Activated CD8-positive, alpha-beta memory T cell treated with anti-CD3 and anti-CD28 coated beads, Interleukin-2, amount 10 ng/mL, durations not matched to agents 7 days and 5 days (primary cell): ENCODE measurements at regions of chr15 and their contacts with region 1.

Region 1: GRCh38 chr15:65638681-65639089 is 16.9 kb downstream of the SLC24A1 start:
- DNase-seq: peak; percentile 62
- ATAC-seq: peak; percentile 78
- H3K4me3 Mint-ChIP-seq: peak overlapping the region; percentile 52
- H3K27ac Mint-ChIP-seq: peak overlapping the region; percentile 3
- H3K4me1 Mint-ChIP-seq: peaks cover 17% of the 10 kb centered on the region
- H3K27me3 Mint-ChIP-seq: no peaks in the 10 kb centered on the region

Region 2: GRCh38 chr15:65344214-65344917 is 294.3 kb before region 1 on chr15:
- CTCF ChIA-PET with region 1: no interaction called
- DNase-seq: no peak
- ATAC-seq: no peak
- H3K4me3 Mint-ChIP-seq: no peak overlapping the region
- H3K27ac Mint-ChIP-seq: no peak overlapping the region
- H3K4me1 Mint-ChIP-seq: peaks cover 4% of the 10 kb centered on the region
- H3K27me3 Mint-ChIP-seq: peaks cover 33% of the 10 kb centered on the region

Region 3: DNA sequence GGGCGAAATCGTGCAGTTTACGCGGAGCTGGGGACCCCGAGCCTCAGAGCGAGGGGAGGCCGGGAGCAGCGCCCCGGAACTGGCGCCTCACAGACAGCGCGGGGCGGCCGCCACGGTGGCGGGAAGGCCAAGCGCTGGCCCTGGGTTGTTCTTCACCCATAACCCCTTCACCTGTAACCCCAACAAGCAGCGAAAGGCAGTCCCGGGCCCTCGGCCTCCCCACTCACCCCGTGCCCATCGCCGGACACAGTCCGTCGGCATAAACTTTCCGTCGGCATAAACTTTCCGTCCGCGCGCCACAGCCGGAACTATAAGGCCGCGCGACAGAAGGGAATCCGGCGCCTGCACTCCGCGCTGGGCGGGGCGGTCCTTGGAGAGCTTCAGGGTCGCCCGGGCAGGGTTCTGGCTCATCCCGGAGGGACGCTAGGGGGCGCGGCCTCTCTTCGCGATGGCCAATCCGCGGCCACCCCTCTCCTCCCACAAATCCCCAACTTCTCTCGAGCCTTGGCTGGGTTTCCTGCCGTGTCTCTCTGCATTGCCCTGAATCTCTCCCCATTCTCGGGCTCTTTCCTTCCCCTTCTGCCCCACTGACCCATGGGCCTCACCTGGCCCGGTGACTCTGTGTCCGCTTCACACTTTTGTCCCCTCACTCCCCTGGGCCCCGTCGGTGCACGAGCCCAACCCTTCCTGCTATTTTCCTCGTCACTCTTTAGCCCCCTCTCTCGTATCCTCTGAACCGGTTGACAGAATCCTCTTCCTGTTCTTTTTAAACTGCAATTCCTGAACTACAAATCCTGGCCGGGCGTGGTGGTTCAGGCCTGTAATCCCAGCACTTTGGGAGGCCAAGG is 27.6 kb before region 1 on chr15 and contains the start of gene INTS14:
- CTCF ChIA-PET with region 1: interaction called, 11 read pairs
- DNase-seq: peak; percentile 96
- ATAC-seq: peak; percentile 99
- H3K4me3 Mint-ChIP-seq: peak within 1 kb of the TSS; percentile 99
- H3K27ac Mint-ChIP-seq: peak within 1 kb of the TSS; percentile 97
- H3K4me1 Mint-ChIP-seq: peaks cover 52% of the 10 kb centered on the region
- H3K27me3 Mint-ChIP-seq: no peaks in the 10 kb centered on the region
- total RNA-seq, gene INTS14: 44.2 to 51.7 TPM

Region 4: DNA sequence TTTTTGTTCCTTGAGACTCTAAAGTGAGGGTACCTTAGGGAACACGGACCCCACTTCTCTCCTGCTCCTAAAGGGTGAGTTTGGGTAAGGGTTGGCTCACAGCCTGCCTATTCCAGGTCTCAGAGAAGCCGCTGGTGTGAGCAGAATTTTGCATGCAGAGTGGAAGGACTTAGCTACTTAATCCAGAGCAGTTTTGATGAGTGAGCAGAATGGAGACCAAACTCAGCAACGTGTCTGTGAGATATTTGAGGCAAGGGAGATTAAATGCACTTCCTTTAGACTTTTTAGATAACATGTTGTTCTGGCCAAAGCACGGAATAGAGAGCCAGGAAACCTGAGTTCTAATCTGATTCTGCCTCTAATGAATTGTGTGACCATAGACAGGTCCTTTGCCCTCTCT is 11.8 kb before region 1 on chr15:
- CTCF ChIA-PET with region 1: interaction called, 26 read pairs
- DNase-seq: no peak
- ATAC-seq: no peak
- H3K4me3 Mint-ChIP-seq: no peak overlapping the region
- H3K27ac Mint-ChIP-seq: no peak overlapping the region
- H3K4me1 Mint-ChIP-seq: peaks cover 17% of the 10 kb centered on the region
- H3K27me3 Mint-ChIP-seq: no peaks in the 10 kb centered on the region

Region 5: GRCh38 chr15:65690778-65691177 is 52.1 kb after region 1 on chr15:
- CTCF ChIA-PET with region 1: no interaction called
- DNase-seq: no peak
- ATAC-seq: no peak
- H3K4me3 Mint-ChIP-seq: no peak overlapping the region
- H3K27ac Mint-ChIP-seq: no peak overlapping the region
- H3K4me1 Mint-ChIP-seq: peaks cover 2% of the 10 kb centered on the region
- H3K27me3 Mint-ChIP-seq: no peaks in the 10 kb centered on the region

Region 6: GRCh38 chr15:65832549-65833364 is 194.1 kb after region 1 on chr15:
- CTCF ChIA-PET with region 1: interaction called, 28 read pairs
- DNase-seq: peak; percentile 80
- ATAC-seq: peak; percentile 77
- H3K4me3 Mint-ChIP-seq: peak overlapping the region; percentile 51
- H3K27ac Mint-ChIP-seq: peak overlapping the region; percentile 95
- H3K4me1 Mint-ChIP-seq: peaks cover 48% of the 10 kb centered on the region
- H3K27me3 Mint-ChIP-seq: no peaks in the 10 kb centered on the region